Motor neuron (in vitro differentiated cells): ENCODE measurements at regions of chr13 and their contacts with region 1.

Region 1: GRCh38 chr13:21465710-21466160 is 6.6 kb upstream of the ZDHHC20 start:
- ATAC-seq: peak in 3 of 8 experiments; percentile 25 to 61 (median 39)
- H3K4me3 ChIP-seq: no peak overlapping the region
- H3K27ac ChIP-seq: no peak overlapping the region
- H3K4me1 ChIP-seq: no peaks in the 10 kb centered on the region

Region 2: DNA sequence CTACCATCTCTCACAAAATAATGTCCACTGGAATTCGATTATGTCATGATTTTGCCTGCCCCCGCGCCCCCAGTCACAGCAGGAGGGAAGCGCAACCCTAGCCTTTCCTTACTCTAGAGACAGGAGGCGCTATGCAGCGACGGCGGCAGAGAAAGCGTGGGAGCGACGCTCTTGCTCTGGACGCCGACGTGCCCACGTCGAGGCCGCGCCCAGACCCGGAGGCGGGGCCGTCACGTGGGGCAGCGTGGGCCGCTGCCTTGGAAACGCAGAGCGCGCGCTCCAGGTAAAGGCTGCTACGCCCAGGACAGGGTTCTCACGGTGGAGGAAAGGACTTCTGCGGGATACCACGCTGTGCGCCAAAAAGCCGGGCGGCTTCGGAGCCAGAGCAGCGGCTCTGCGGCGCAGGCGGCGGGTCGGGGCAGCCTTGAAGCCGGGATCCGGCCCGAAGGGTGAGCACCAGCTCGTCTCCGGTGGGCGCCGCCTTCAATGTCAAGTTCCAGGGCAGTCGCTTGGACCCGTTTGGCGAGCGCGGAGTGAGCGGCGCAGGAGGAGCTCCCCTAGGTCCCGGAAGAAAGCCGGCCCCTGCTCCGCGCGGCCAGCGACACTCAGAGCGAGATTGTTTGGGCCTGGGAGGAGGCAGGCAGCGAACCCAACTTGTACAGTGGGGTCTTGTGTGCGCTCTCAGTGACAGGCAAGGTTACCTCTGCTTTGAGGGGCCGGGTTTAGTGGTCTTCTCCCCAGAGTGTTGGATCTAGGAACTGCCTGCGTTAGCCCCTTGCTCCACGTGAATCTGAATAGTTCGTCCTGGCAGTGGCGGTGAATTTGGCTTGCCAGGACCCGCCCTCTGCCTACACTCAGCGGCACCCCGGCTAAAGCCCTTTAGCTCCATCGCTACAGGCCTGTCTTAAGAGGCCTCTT is 167.6 kb before region 1 on chr13:
- in situ Hi-C with region 1: loop called in 3 of 9 experiments (anchors 10 to 25 kb)
- ATAC-seq: peak; percentile 92 to 96 (median 94)
- H3K4me3 ChIP-seq: peak overlapping the region; percentile 59 to 97 (median 80)
- H3K27ac ChIP-seq: peak overlapping the region; percentile 5 to 69
- H3K4me1 ChIP-seq: peaks cover 2 to 4% of the 10 kb centered on the region in 2 donors

Region 3: GRCh38 chr13:21749410-21749809 is 283.7 kb after region 1 on chr13:
- in situ Hi-C with region 1: no loop called
- ATAC-seq: no peak
- H3K4me3 ChIP-seq: no peak overlapping the region
- H3K27ac ChIP-seq: no peak overlapping the region
- H3K4me1 ChIP-seq: peaks cover 0 to 9% of the 10 kb centered on the region in 2 donors